PC-3 (cell line): ENCODE measurements at regions of chr6 and their contacts with region 1.

Region 1: GRCh38 chr6:132969196-132969595 is 154.8 kb downstream of the RPS12 start:
- DNase-seq: peak; percentile 12
- ATAC-seq: 0 out of 2 replicates have a peak, but pooled peaks have one; percentile 5
- H3K4me3 ChIP-seq: no peak overlapping the region
- H3K27ac ChIP-seq: peak overlapping the region; percentile 5; the same call in 1 of the 2 replicates
- H3K4me1 ChIP-seq: peaks cover 49% of the 10 kb centered on the region
- H3K27me3 ChIP-seq: no peaks in the 10 kb centered on the region
- CTCF ChIP-seq: no peak

Region 2: GRCh38 chr6:133062077-133062476 is 92.9 kb after region 1 on chr6:
- CTCF ChIA-PET with region 1: no interaction called
- POLR2A ChIA-PET with region 1: no interaction called
- intact Hi-C with region 1: no loop called
- DNase-seq: peak; percentile 81
- ATAC-seq: peak; percentile 85
- H3K4me3 ChIP-seq: no peak overlapping the region
- H3K27ac ChIP-seq: peak overlapping the region; percentile 78
- H3K4me1 ChIP-seq: peaks cover 16% of the 10 kb centered on the region
- H3K27me3 ChIP-seq: no peaks in the 10 kb centered on the region
- CTCF ChIP-seq: no peak

Region 3: GRCh38 chr6:134678436-134678889 is 1709.3 kb after region 1 on chr6:
- CTCF ChIA-PET with region 1: interaction called, 10 read pairs
- POLR2A ChIA-PET with region 1: no interaction called
- intact Hi-C with region 1: no loop called
- DNase-seq: no peak
- ATAC-seq: no peak
- H3K4me3 ChIP-seq: no peak overlapping the region
- H3K27ac ChIP-seq: no peak overlapping the region
- H3K4me1 ChIP-seq: no peaks in the 10 kb centered on the region
- H3K27me3 ChIP-seq: no peaks in the 10 kb centered on the region
- CTCF ChIP-seq: no peak